Aorta (tissue), 5 donors: ENCODE measurements at regions of chr14 and their contacts with region 1.

Region 1: GRCh38 chr14:22829661-22830442 is at the start of gene MRPL52:
- DNase-seq: peak; percentile 95 to 96
- ATAC-seq: peak; percentile 95
- H3K4me3 ChIP-seq: peak within 1 kb of the TSS; percentile 41 to 75
- H3K27ac ChIP-seq: peak within 1 kb of the TSS in 1 of 2 donors; percentile 49
- H3K4me1 ChIP-seq: peaks cover 0 to under 1% of the 10 kb centered on the region in 2 donors
- H3K27me3 ChIP-seq: no peaks in the 10 kb centered on the region
- total RNA-seq, gene MRPL52: 37.2 to 49.1 TPM

Region 2: DNA sequence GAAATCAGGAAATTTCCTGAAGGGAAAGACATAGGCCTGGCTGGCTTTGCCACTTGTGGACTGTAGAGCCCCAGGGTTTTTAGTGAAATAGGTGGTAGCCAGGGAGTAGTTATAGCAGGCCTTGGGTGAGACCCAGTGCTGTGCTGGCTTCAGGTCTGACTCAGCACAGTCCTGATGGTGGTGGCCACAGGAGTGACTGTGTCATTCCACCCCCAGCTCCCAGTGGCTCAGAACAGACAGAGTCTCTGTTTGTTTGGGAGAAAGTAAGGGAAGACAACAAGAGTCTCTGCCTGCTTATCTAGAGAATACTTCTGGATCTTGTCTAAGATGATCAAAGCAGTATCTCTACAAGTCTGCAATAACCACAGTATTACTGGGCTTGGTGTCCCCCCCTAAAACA is 158.2 kb before region 1 on chr14:
- intact Hi-C with region 1: no loop called
- DNase-seq: no peak
- ATAC-seq: no peak
- H3K4me3 ChIP-seq: no peak overlapping the region
- H3K27ac ChIP-seq: no peak overlapping the region
- H3K4me1 ChIP-seq: no peaks in the 10 kb centered on the region
- H3K27me3 ChIP-seq: no peaks in the 10 kb centered on the region

Region 3: DNA sequence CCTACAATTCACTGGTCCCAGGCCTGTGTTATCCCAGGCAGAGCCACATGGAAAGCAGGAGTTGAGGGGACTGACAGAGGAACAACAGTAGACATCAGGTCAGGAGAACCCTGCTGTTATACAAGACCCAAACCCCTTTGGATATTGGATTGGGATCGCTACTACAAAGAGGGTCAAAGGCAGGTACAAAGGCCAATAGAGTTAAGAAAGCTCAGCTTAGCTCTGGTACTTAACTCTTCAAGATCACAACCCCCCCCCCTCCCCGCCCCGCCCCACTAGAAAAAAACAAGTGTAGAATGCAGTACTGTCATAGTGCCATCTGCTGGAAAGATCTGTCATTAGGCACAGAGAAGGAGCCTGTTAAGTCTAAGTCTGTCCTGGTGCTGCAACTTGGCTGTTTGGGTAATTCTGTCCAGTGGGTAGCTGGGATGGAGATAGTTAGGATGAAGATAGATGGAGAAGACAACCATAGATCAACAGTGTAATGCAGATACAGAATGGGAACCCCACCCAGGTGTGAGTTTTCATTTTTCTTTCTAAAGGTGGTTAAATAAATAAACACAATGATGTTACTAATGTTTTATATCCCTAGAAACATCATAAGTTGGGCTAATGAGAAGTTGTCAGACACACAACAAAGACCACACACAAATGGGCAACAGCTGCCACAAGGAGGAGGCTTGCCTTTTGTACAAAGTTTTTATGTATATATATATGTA is 70.4 kb after region 1 on chr14:
- intact Hi-C with region 1: loop called in 1 of 2 experiments (anchors 10 kb)
- DNase-seq: peak in 1 of 2 donors; percentile 31
- ATAC-seq: peak; percentile 75
- H3K4me3 ChIP-seq: no peak overlapping the region
- H3K27ac ChIP-seq: peak overlapping the region in 1 of 2 donors; percentile 34
- H3K4me1 ChIP-seq: no peaks in the 10 kb centered on the region
- H3K27me3 ChIP-seq: no peaks in the 10 kb centered on the region